Naive thymus-derived CD8-positive, alpha-beta T cell (primary cell): ENCODE measurements at regions of chr11 and their contacts with region 1.

Region 1: GRCh38 chr11:78139422-78140391 is at the start of gene ALG8:
- DNase-seq: peak; percentile 92 to 98 (median 96)
- ATAC-seq: peak; percentile 92 to 97
- H3K4me3 Mint-ChIP-seq: peak within 1 kb of the TSS; percentile 84 to 98 (median 95)
- H3K27ac Mint-ChIP-seq: peak within 1 kb of the TSS; percentile 93 to 98 (median 96)
- H3K4me1 Mint-ChIP-seq: peaks cover 22 to 53% (median 44%) of the 10 kb centered on the region in 4 donors
- H3K27me3 Mint-ChIP-seq: no peaks in the 10 kb centered on the region
- polyA plus RNA-seq, gene ALG8: 54.6 to 65.0 (median 64.4) TPM

Region 2: DNA sequence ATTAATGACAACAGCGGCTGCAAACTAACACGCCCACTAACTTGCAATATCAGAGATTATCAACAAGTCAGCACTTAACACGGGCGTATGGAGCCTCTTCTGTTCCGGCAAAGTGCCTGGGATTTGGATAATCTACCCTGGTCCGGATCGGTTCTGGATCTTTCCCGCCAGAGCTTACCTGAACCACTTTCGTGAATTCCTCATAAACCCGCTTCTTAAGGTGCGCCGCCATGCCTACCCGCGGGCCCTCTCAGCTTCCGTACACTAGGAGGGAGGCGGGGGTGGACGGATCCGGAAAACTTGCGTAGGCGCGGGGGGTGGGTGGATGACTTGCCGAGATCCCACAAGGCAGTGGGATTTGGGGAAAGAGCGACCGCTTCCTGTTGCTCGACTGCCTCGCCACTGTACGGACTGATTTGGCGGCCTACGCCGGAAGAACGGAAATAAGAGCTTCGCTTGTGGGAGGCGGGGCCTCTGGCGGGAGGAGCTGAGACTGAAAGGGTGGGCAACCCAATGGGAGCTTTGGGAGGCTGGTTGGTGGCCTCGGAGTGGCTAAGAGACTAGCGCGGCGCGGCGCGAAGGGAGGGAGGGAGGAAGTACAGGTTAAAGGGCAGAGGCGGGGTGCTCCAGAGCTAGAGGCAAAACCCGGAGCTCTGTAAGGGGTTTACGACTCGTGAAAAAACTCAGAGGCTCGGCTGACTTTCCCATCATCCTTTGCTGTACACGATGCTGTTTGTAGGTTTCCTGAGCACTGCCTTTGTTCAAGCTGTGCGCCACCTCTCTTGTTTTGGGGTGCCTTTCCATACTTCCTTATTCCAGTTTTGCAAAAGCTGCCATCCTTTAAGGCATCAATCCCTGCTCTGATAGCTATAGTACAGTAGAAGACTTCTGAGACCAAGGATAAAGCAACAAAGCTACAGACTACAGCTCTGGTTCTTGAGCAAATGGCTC is 145.0 kb before region 1 on chr11 and contains the start of gene INTS4:
- POLR2A ChIA-PET with region 1: interaction called, 13 read pairs
- DNase-seq: peak; percentile 89 to 99 (median 97)
- ATAC-seq: peak; percentile 96
- H3K4me3 Mint-ChIP-seq: peak within 1 kb of the TSS; percentile 90 to 97 (median 94)
- H3K27ac Mint-ChIP-seq: peak within 1 kb of the TSS; percentile 92 to 99 (median 98)
- H3K4me1 Mint-ChIP-seq: peaks cover 8 to 45% (median 32%) of the 10 kb centered on the region in 4 donors
- H3K27me3 Mint-ChIP-seq: no peaks in the 10 kb centered on the region
- polyA plus RNA-seq, gene INTS4: 36.1 to 42.7 (median 36.5) TPM

Region 3: DNA sequence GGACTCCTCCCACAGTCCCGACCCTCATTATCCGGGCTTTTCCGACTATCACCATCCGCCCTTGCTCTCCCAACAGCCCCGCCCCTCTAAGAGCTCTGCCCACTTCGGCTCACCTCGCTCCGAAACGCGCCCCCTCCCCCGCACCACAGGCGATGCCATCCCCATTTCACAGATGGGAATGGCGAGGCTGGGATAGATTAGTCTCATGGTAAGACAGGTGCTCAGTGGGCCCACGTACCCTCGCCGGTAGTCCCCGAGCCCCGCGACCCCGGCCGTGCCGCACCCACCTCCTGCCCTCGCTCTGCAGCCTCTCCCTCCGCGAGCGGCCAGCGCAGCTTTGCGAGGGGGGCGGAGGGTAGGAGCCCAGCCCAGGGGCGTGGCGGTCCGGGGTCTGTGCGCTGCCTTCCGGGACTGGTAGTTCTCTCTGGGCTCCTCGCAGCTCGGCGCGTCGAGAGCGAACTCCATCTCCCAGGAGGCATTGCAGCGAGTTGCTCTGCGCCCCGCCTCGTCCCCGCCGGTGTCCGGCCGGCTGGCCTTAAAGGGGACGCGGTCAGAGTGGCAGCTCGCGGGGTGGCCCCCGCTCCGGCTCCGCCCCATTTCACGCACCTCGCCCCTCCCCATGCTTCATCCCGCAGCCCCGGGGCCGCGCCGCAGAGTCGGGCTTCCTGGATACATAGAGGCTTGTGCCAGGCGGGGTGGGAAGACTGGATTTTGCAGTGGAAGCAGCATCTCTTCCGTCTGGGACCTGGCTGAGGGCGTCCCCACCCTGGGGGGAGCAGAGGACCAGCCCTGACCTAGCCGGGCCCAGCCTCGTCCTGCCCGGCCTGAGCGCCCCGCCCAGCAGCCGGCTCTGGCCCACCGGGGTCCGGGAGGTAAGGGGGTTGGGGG is 48.8 kb after region 1 on chr11 and contains the starts of genes KCTD21 and USP35:
- POLR2A ChIA-PET with region 1: interaction called, 21 read pairs
- DNase-seq: peak; percentile 79 to 94 (median 86)
- ATAC-seq: peak; percentile 90 to 93
- H3K4me3 Mint-ChIP-seq: peak within 1 kb of the TSS; percentile 95 to 99 (median 98)
- H3K27ac Mint-ChIP-seq: peak within 1 kb of the TSS; percentile 87 to 99 (median 96)
- H3K4me1 Mint-ChIP-seq: peaks cover 30 to 63% (median 56%) of the 10 kb centered on the region in 4 donors
- H3K27me3 Mint-ChIP-seq: no peaks in the 10 kb centered on the region
- polyA plus RNA-seq, gene KCTD21: 0.08 to 2.5 (median 0.94) TPM
- polyA plus RNA-seq, gene USP35: 0.76 to 1.5 (median 1.5) TPM

Region 4: DNA sequence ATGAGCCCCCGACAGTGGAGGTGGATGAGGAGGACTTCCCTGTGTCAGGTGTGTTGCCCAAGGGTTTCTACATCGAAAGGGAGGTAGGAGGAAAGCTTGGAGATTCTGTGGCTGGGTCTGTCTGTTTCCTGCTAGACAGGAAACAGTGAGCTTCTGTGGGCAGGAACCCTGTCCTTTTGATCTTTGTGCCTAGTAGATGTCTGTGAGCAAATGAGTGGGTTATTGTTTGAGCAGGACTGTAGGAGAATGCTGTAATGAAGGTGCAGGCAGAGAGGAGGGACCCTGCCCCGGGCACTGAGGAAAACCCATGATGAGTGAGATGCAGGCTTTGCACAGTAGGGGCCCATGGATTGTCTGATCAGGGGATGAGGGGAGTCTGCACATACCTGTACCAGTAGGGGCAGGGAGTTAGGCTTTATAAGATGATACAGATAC is 63.0 kb after region 1 on chr11:
- POLR2A ChIA-PET with region 1: interaction called, 12 read pairs
- DNase-seq: peak in 9 of 10 donors; percentile 39 to 85 (median 76)
- ATAC-seq: peak; percentile 83
- H3K4me3 Mint-ChIP-seq: peak overlapping the region; percentile 73 to 91 (median 87)
- H3K27ac Mint-ChIP-seq: peak overlapping the region; percentile 85 to 99 (median 97)
- H3K4me1 Mint-ChIP-seq: peaks cover 25 to 52% (median 46%) of the 10 kb centered on the region in 4 donors
- H3K27me3 Mint-ChIP-seq: no peaks in the 10 kb centered on the region